ENCODE measurements at regions of chr15 and their contacts with region 1.

Region 1: DNA sequence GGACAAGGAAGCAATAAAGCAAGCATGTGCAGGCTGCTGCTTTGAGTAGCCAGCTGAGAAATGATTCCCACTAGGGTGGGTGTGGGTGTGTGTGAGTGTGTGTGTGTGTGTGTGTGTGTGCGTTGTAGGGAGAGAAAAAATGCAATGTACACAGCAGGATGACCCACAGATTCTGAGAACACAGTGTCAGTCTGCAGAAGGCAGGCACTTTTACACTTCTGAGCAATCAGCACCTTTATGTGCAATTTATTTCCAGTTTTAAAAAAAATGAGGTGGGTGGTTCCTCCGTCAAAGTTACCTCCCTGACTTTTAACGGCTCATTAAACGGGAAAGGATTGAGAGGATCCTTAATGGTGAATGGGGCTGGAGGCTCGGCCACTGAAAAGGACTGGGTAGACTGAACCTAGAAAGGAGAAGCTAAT is 38.5 kb upstream of the LIPC start:
- DNase-seq: peak; percentile 29 to 63
- H3K4me3 ChIP-seq: no peak overlapping the region
- H3K4me3 Mint-ChIP-seq: no peak overlapping the region
- H3K27ac Mint-ChIP-seq: peak overlapping the region; percentile 90
- H3K4me1 ChIP-seq: peaks cover 81% of the 10 kb centered on the region
- H3K4me1 Mint-ChIP-seq: peaks cover 83% of the 10 kb centered on the region
- H3K27me3 ChIP-seq: no peaks in the 10 kb centered on the region
- H3K27me3 Mint-ChIP-seq: no peaks in the 10 kb centered on the region
- CTCF ChIP-seq: no peak

Region 2: GRCh38 chr15:58331903-58332675 is 61.2 kb before region 1 on chr15:
- CTCF ChIA-PET with region 1: no interaction called
- POLR2A ChIA-PET with region 1: interaction called, 3 read pairs
- intact Hi-C with region 1: loop called (anchors 2 kb)
- DNase-seq: peak; percentile 84 to 91
- H3K4me3 ChIP-seq: no peak overlapping the region
- H3K4me3 Mint-ChIP-seq: peak overlapping the region; percentile 30
- H3K27ac Mint-ChIP-seq: peak overlapping the region; percentile 94
- H3K4me1 ChIP-seq: peaks cover 36% of the 10 kb centered on the region
- H3K4me1 Mint-ChIP-seq: peaks cover 42% of the 10 kb centered on the region
- H3K27me3 ChIP-seq: no peaks in the 10 kb centered on the region
- H3K27me3 Mint-ChIP-seq: no peaks in the 10 kb centered on the region
- CTCF ChIP-seq: no peak

Region 3: DNA sequence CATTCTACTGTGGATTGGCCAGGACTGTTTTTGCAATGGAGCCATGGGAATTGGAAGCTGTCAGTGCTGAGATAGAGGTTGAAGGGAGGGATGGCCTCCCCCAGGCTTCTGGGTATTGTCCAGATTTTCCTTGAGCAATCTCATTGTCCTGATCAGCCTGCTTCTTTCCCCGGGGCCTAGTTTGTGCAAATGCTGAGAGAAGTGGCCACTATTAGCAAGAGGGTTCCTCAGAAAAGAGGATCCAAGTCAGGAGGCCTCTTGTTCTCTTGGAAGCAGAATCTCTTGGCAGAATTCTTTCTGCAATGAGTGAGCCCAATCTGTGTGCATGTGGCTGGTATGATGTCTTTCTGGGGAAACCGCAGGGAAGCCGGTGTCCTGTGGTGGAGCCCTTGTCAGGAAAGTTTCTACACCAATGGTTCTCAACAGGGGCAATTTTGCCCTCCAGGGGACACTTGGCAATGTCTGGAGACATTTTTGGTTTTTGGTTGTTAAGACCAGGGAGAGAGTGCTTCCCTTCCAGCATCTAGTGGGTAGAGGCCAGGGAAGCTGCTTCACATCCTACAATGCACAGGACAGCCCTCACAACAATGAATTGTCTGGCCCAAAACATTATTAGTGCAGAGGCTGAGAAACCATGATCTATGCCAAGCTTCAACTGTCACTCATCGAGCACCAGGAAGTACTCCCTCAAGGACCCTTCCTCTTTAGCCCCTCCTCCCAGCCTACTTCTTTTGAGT is 40.5 kb after region 1 on chr15:
- CTCF ChIA-PET with region 1: no interaction called
- POLR2A ChIA-PET with region 1: no interaction called
- intact Hi-C with region 1: loop called (anchors 5 kb)
- DNase-seq: no peak
- H3K4me3 ChIP-seq: no peak overlapping the region
- H3K4me3 Mint-ChIP-seq: peak overlapping the region; percentile 74
- H3K27ac Mint-ChIP-seq: peak overlapping the region; percentile 77
- H3K4me1 ChIP-seq: peaks cover 55% of the 10 kb centered on the region
- H3K4me1 Mint-ChIP-seq: peaks cover 15% of the 10 kb centered on the region
- H3K27me3 ChIP-seq: no peaks in the 10 kb centered on the region
- H3K27me3 Mint-ChIP-seq: no peaks in the 10 kb centered on the region
- CTCF ChIP-seq: peak in 1 of 2 experiments; percentile 3

Region 4: GRCh38 chr15:58440158-58440910 is 47.1 kb after region 1 on chr15:
- CTCF ChIA-PET with region 1: no interaction called
- POLR2A ChIA-PET with region 1: no interaction called
- intact Hi-C with region 1: loop called (anchors 2 kb)
- DNase-seq: no peak
- H3K4me3 ChIP-seq: no peak overlapping the region
- H3K4me3 Mint-ChIP-seq: peak overlapping the region; percentile 13
- H3K27ac Mint-ChIP-seq: peak overlapping the region; percentile 51
- H3K4me1 ChIP-seq: peaks cover 85% of the 10 kb centered on the region
- H3K4me1 Mint-ChIP-seq: peaks cover 36% of the 10 kb centered on the region
- H3K27me3 ChIP-seq: no peaks in the 10 kb centered on the region
- H3K27me3 Mint-ChIP-seq: no peaks in the 10 kb centered on the region
- CTCF ChIP-seq: no peak

Region 5: GRCh38 chr15:58622877-58623276 is 229.6 kb after region 1 on chr15:
- CTCF ChIA-PET with region 1: no interaction called
- POLR2A ChIA-PET with region 1: no interaction called
- intact Hi-C with region 1: no loop called
- DNase-seq: no peak
- H3K4me3 ChIP-seq: no peak overlapping the region
- H3K4me3 Mint-ChIP-seq: no peak overlapping the region
- H3K27ac Mint-ChIP-seq: no peak overlapping the region
- H3K4me1 ChIP-seq: no peaks in the 10 kb centered on the region
- H3K4me1 Mint-ChIP-seq: no peaks in the 10 kb centered on the region
- H3K27me3 ChIP-seq: no peaks in the 10 kb centered on the region
- H3K27me3 Mint-ChIP-seq: no peaks in the 10 kb centered on the region
- CTCF ChIP-seq: no peak